ENCODE measurements at regions of chr5 and their contacts with region 1.

Region 1: DNA sequence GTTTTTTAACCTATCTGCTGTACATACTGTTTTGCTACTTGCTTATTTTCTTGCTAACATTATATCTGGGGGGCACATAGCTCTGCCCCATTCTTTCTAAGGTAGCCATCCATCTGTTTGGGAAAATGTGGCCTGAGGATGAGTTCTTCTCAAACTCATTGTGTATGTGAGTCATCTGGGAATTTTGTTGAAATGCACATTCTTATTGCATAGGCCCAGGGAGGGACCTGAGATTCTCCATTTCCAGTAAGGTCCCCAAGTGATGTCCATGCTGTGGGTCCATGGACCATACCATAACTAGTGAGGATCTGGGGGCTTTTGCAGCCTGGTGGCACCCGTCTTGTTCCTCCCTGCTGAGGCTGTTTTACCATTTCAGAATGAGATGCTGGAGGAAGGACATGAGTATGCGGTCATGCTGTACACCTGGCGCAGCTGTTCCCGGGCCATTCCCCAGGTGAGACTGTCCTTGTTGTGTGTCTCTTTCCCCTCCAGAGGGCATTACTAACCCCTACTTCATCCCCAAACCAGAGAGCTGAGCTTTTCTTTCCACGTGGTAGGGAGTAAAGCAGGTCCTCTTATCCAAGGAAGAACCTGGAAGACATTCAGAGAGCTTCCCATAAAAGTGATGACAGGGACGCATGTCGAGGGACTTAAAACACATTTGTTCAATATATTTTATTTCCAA is 28.6 kb downstream of the CYFIP2 start:
- DNase-seq: no peak
- ATAC-seq: no peak
- H3K4me3 ChIP-seq: no peak overlapping the region
- H3K27ac ChIP-seq: no peak overlapping the region
- H3K4me1 ChIP-seq: peaks cover 0 to 15% (median 0%) of the 10 kb centered on the region in 9 donors
- H3K27me3 ChIP-seq: no peaks in the 10 kb centered on the region
- CTCF ChIP-seq: no peak

Region 2: DNA sequence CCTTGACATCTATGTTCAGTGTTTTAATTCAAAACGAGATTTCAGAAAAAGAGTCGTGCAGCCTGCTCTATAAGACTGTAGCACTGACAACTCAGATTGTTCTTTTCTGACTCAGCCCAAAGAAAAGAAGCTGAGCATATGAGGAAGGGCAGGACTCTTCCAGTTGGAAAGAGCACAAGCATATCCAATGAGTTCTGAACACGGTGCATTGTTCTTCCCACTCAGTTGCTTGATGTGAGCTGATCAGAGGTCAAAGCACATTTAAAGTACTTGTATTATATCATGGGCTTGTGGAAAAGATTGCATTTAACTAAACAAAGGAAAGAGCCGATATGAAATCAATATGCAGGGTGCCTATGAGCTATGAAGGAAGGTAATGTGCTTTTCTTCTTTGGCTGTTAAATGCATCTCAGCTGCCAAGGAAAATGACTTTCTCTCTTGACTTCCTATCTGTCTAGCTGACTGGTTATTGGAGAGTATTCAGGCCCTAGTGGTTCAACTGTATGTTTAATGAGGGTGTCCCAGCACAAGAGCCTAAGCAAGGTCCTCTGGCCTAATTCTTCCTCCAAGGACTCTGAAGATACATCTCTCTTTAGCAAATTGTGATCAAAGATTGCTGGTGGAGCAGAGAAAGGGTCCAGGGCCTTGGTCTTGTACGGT is 671.0 kb before region 1 on chr5:
- intact Hi-C with region 1: no loop called
- DNase-seq: no peak
- ATAC-seq: peak in 3 of 8 donors; percentile 27 to 61 (median 59)
- H3K4me3 ChIP-seq: no peak overlapping the region
- H3K27ac ChIP-seq: no peak overlapping the region
- H3K4me1 ChIP-seq: peaks cover 0 to 19% (median 0%) of the 10 kb centered on the region in 9 donors
- H3K27me3 ChIP-seq: no peaks in the 10 kb centered on the region
- CTCF ChIP-seq: no peak

Region 3: DNA sequence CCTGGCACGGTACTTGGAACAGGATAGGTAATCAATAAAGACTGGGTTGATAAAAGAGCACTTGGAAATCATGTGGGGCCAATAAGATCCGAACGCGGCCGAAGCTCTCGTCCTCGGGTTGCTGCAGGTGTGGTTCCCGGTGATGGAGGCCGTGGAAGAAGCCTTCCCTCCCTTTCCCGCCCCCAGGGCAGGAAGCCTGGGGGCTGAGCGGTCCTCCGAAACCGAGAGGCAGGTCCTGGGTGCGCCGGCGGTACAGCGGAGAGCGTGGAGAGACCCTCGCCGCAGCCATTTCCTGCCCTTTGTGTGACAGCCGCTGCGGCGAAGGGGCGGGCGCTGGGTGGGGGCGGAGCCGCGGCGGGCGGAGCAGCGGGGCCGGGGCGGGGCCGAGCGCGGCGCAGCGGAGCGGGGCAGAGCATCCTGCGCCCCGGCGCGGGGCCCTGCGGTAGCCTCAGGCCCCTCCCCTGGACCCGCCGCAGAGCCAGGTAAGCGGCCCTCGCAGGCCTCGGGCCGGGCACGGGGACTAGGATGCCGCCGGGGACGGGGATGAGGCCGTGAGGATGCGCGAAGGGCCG is 28.7 kb before region 1 on chr5 and contains the start of gene CYFIP2:
- intact Hi-C with region 1: loop called in 1 of 10 experiments (anchors 5 kb)
- DNase-seq: peak in 1 of 2 donors; percentile 70
- ATAC-seq: peak; percentile 73 to 92 (median 80)
- H3K4me3 ChIP-seq: peak within 1 kb of the TSS; percentile 16 to 82 (median 68)
- H3K27ac ChIP-seq: peak within 1 kb of the TSS; percentile 43 to 90 (median 74)
- H3K4me1 ChIP-seq: peaks cover 0 to 61% (median 15%) of the 10 kb centered on the region in 9 donors
- H3K27me3 ChIP-seq: peaks cover 0 to 6% (median 0%) of the 10 kb centered on the region in 7 donors
- CTCF ChIP-seq: no peak
- total RNA-seq, gene CYFIP2: 20.3 to 50.8 (median 34.4) TPM